Activated CD4-positive, alpha-beta T cell treated with anti-CD3 and anti-CD28 coated beads for 36 hours (primary cell): ENCODE measurements at regions of chr11 and their contacts with region 1.

Region 1: DNA sequence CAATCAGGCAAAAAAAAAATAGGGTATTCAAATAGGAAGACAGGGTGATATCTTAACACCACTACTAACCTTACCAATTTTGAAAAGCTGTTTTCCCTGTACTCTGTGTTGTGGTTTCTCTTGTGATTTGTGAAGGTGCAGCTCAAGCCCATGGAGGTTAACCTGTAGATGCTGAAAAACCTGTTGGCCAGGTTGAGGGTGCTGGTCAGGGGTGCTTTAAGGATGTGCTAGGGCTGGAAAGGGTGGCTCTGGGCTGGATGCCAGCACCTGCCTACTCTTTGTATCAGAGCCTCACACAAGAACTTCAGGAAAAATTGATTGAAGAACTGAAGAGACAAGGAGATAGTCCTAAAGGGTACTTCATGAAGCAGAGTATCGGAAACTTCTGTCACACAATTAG is 18.3 kb upstream of the OR5M8 start:
- DNase-seq: no peak
- ATAC-seq: no peak
- H3K4me3 Mint-ChIP-seq: no peak overlapping the region
- H3K27ac Mint-ChIP-seq: no peak overlapping the region
- H3K4me1 Mint-ChIP-seq: no peaks in the 10 kb centered on the region
- H3K27me3 Mint-ChIP-seq: no peaks in the 10 kb centered on the region

Region 2: GRCh38 chr11:56271092-56271491 is 238.3 kb before region 1 on chr11:
- CTCF ChIA-PET with region 1: no interaction called
- POLR2A ChIA-PET with region 1: no interaction called
- intact Hi-C with region 1: no loop called
- DNase-seq: no peak
- ATAC-seq: no peak
- H3K4me3 Mint-ChIP-seq: no peak overlapping the region
- H3K27ac Mint-ChIP-seq: no peak overlapping the region
- H3K4me1 Mint-ChIP-seq: no peaks in the 10 kb centered on the region
- H3K27me3 Mint-ChIP-seq: no peaks in the 10 kb centered on the region

Region 3: DNA sequence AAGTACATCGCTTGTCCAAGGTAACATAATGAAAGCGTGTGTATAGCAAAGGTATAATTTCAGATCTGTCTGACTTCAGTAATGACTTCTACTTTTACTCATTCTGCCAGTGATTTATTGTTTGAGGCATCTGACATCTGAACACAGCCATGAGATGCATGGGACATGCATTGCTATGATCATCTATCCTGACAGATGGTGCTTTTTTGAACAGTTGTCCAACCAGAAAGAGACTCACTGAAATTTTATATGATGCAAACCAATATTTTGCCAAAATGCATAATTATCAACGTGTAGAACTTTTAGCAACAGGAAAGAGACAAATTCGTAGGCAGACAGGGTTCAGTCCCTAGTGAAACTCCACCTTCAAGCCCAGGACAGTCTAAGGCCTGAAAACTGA is 55.9 kb before region 1 on chr11:
- CTCF ChIA-PET with region 1: no interaction called
- POLR2A ChIA-PET with region 1: no interaction called
- intact Hi-C with region 1: loop called in 1 of 2 experiments (anchors 10 kb)
- DNase-seq: no peak
- ATAC-seq: no peak
- H3K4me3 Mint-ChIP-seq: no peak overlapping the region
- H3K27ac Mint-ChIP-seq: no peak overlapping the region
- H3K4me1 Mint-ChIP-seq: no peaks in the 10 kb centered on the region
- H3K27me3 Mint-ChIP-seq: no peaks in the 10 kb centered on the region

Region 4: DNA sequence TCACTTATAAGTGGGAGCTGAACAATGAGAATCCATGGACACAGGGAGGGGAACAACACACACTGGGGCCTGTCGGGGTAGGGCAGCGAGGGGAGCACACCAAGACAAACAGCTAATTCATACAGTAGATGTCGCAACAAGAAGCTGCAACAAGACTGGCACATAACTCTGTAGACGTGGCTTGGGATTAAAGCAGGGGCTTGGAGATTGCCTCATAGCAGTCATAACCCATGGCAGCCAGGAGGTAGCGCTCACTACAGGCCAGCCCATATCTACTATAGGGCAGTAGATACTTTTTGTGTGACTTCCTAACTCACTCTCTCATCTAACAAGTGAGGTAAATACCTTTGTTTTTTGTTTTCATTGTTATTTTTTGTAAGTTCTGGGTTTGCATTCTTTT is 240.8 kb after region 1 on chr11:
- CTCF ChIA-PET with region 1: no interaction called
- POLR2A ChIA-PET with region 1: no interaction called
- intact Hi-C with region 1: loop called in 1 of 2 experiments (anchors 10 kb)
- DNase-seq: no peak
- ATAC-seq: no peak
- H3K4me3 Mint-ChIP-seq: no peak overlapping the region
- H3K27ac Mint-ChIP-seq: no peak overlapping the region
- H3K4me1 Mint-ChIP-seq: no peaks in the 10 kb centered on the region
- H3K27me3 Mint-ChIP-seq: no peaks in the 10 kb centered on the region